Activated CD8-positive, alpha-beta T cell treated with anti-CD3 and anti-CD28 coated beads for 36 hours (primary cell): ENCODE measurements at regions of chr5 and their contacts with region 1.

Region 1: DNA sequence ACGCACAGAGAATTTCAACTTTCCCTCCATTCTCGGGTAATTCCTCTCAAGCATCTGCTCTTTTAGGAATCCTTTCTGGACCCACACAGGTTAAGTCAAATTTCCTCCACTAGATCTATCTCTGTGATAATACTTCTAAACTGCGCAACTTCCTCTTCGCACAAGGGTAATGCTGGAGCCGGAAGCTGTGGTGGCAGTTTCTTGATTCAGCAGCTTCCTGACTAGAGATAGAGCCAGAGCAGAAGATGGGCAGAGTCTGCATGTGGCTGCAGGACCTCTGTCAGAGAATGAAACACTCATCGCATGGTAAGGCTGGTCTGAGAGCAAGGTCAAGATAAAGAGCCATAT is 11.1 kb upstream of the CDC42SE2 start:
- DNase-seq: peak; percentile 90
- ATAC-seq: peak; percentile 68
- H3K4me3 Mint-ChIP-seq: peak overlapping the region; percentile 86
- H3K27ac Mint-ChIP-seq: peak overlapping the region; percentile 96
- H3K4me1 Mint-ChIP-seq: peaks cover 55% of the 10 kb centered on the region
- H3K27me3 Mint-ChIP-seq: no peaks in the 10 kb centered on the region
- CTCF ChIP-seq: no peak

Region 2: DNA sequence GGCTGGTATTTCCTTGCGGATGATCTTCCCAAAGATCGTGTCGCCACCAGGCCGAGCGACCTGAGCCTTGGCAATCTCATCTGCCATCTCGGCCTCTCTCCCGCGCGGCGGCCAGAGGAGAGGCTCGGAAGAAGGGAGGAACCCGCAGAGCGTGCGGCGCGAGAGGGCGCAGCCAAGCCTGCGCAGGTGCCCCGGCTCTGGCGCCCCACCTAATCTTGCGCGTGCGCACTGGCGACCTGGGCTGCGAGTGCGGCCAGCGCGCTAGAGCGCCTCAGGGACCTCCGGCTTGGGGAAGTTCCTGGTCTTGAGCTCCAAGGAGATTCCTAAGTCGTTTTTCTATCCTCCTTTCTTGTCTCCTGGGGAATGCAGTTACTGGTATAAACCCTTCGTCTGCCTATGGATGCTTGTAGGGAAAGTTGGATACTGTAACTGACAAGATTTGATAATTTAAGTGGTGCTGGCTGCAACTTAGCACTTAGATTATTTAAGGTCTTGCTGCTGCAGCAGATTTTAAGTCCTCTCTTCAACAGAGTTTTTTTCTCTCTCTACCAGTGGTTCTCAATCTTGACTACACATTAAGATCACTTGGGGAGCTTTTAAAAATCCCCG is 87.6 kb before region 1 on chr5 and contains the start of gene HINT1:
- CTCF ChIA-PET with region 1: no interaction called
- POLR2A ChIA-PET with region 1: interaction called, 12 read pairs
- intact Hi-C with region 1: loop called (anchors 1 kb)
- DNase-seq: peak; percentile 94
- ATAC-seq: peak; percentile 90
- H3K4me3 Mint-ChIP-seq: peak within 1 kb of the TSS; percentile 98
- H3K27ac Mint-ChIP-seq: peak within 1 kb of the TSS; percentile 98
- H3K4me1 Mint-ChIP-seq: peaks cover 38% of the 10 kb centered on the region
- H3K27me3 Mint-ChIP-seq: no peaks in the 10 kb centered on the region
- CTCF ChIP-seq: no peak
- total RNA-seq, gene HINT1: 317 to 322 TPM

Region 3: DNA sequence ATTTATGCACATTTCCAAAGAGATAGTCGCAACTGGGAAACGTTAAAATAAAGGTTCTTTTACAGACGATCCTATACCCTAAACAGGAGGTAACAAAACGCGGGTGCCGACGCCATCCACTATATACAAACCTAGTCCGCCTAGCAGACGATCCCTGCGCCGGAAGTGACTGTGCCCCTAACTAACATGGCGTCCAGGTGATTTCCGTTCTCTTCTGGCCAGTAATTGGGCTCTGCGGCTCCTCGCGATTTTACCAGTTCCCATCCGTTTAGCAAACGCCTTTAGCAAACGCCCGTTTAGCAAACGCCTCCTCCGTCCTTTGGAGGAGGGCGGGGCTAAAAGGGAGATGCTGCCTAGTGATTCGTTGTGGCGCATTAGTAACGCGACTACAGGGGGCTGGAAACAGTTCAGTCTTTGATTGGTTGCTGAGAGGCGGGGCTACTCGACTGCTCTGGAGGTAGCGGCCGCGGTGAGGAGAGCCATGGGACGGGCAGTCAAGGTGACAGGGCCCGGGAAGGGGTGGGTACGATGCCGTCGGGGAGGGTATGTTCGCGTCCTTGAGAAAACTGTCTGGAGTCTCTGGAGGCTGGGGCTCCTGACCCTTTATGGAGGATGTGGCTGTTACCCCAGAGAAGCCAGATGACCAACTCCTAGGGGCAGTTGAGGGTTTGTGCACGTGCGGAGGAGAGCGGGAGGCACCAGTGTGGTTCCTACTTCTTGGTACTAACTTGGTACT is 82.1 kb before region 1 on chr5 and contains the start of gene LYRM7:
- CTCF ChIA-PET with region 1: no interaction called
- POLR2A ChIA-PET with region 1: interaction called, 7 read pairs
- intact Hi-C with region 1: loop called (anchors 1 kb)
- DNase-seq: peak; percentile 99
- ATAC-seq: peak; percentile 96
- H3K4me3 Mint-ChIP-seq: peak within 1 kb of the TSS; percentile 98
- H3K27ac Mint-ChIP-seq: peak within 1 kb of the TSS; percentile 96
- H3K4me1 Mint-ChIP-seq: peaks cover 37% of the 10 kb centered on the region
- H3K27me3 Mint-ChIP-seq: no peaks in the 10 kb centered on the region
- CTCF ChIP-seq: no peak
- total RNA-seq, gene LYRM7: 23.2 to 24.0 TPM

Region 4: GRCh38 chr5:131209506-131210150 is 43.2 kb before region 1 on chr5:
- CTCF ChIA-PET with region 1: interaction called, 3 read pairs
- POLR2A ChIA-PET with region 1: interaction called, 9 read pairs
- intact Hi-C with region 1: loop called (anchors 2 kb)
- DNase-seq: peak; percentile 74
- ATAC-seq: peak; percentile 96
- H3K4me3 Mint-ChIP-seq: peak overlapping the region; percentile 76
- H3K27ac Mint-ChIP-seq: peak overlapping the region; percentile 97
- H3K4me1 Mint-ChIP-seq: peaks cover 68% of the 10 kb centered on the region
- H3K27me3 Mint-ChIP-seq: no peaks in the 10 kb centered on the region
- CTCF ChIP-seq: no peak